ENCODE measurements at regions of chr13 and their contacts with region 1.

Region 1: GRCh38 chr13:49936085-49936940 is at the start of gene SPRYD7:
- DNase-seq: peak; percentile 99 to 100
- H3K4me3 ChIP-seq: peak within 1 kb of the TSS; percentile 97
- H3K4me3 Mint-ChIP-seq: peak within 1 kb of the TSS; percentile 100
- H3K27ac Mint-ChIP-seq: peak within 1 kb of the TSS; percentile 98
- H3K4me1 ChIP-seq: peaks cover 43% of the 10 kb centered on the region
- H3K4me1 Mint-ChIP-seq: peaks cover 32% of the 10 kb centered on the region
- H3K27me3 ChIP-seq: no peaks in the 10 kb centered on the region
- H3K27me3 Mint-ChIP-seq: no peaks in the 10 kb centered on the region
- CTCF ChIP-seq: peak; percentile 97 to 99
- total RNA-seq, gene SPRYD7: 16.7 and 20.7 TPM in 2 replicates

Region 2: DNA sequence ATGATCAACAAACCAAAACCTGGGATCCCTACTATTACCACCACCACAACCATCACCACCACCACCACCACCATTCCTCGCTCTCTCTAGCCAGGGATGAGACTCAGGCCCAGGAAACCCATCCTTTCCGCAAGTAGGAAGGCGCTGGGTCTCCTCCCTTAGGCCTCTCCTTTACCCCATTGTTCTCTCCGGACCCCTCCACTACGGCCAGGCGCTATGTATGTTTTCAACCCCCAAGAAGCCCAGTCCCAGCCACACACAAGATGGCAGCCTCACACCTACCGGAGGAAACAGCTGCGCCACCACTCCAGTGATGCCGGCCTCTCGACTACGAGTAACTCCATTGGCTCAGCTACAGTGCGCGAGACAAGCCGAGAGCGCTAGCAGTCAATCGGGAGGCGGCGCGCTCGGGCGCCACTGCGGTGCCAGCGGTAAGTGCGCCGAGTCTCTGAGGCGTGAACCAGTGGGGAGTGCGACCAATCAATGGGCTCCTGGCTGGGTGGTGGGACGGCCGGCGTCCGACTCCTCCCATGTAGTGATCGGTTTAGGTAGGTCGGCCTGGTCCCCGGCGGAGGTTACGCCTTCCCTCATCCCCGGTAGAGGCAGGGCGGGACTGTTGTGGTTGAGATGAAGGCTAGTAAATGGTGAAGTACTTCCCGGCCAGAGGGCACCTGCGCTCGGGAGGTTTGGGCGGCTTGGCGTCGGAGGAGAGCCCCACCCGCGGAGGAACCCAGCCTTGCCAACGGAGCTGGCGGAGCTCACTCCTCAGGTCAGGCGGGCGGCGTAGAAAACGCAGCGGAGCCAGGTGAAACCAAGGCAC is 492.4 kb before region 1 on chr13 and contains the starts of genes CAB39L and SETDB2:
- CTCF ChIA-PET with region 1: interaction called, 4 read pairs
- POLR2A ChIA-PET with region 1: no interaction called
- intact Hi-C with region 1: loop called (anchors 5 kb)
- DNase-seq: peak; percentile 99 to 100
- H3K4me3 ChIP-seq: peak within 1 kb of the TSS; percentile 60
- H3K4me3 Mint-ChIP-seq: peak within 1 kb of the TSS; percentile 87
- H3K27ac Mint-ChIP-seq: peak within 1 kb of the TSS; percentile 90
- H3K4me1 ChIP-seq: no peaks in the 10 kb centered on the region; the same call in 1 of the 2 replicates
- H3K4me1 Mint-ChIP-seq: peaks cover 6% of the 10 kb centered on the region
- H3K27me3 ChIP-seq: no peaks in the 10 kb centered on the region
- H3K27me3 Mint-ChIP-seq: no peaks in the 10 kb centered on the region
- CTCF ChIP-seq: peak; percentile 22 to 39
- total RNA-seq, gene CAB39L: 40.6 and 48.6 TPM in 2 replicates
- total RNA-seq, gene SETDB2: 14.7 and 15.5 TPM in 2 replicates

Region 3: GRCh38 chr13:49669735-49670309 is 266.5 kb before region 1 on chr13:
- CTCF ChIA-PET with region 1: no interaction called
- POLR2A ChIA-PET with region 1: no interaction called
- intact Hi-C with region 1: loop called (anchors 5 kb)
- DNase-seq: peak; percentile 54 to 72
- H3K4me3 ChIP-seq: no peak overlapping the region
- H3K4me3 Mint-ChIP-seq: no peak overlapping the region
- H3K27ac Mint-ChIP-seq: no peak overlapping the region
- H3K4me1 ChIP-seq: no peaks in the 10 kb centered on the region
- H3K4me1 Mint-ChIP-seq: no peaks in the 10 kb centered on the region
- H3K27me3 ChIP-seq: no peaks in the 10 kb centered on the region
- H3K27me3 Mint-ChIP-seq: no peaks in the 10 kb centered on the region
- CTCF ChIP-seq: peak; percentile 63 to 75

Region 4: DNA sequence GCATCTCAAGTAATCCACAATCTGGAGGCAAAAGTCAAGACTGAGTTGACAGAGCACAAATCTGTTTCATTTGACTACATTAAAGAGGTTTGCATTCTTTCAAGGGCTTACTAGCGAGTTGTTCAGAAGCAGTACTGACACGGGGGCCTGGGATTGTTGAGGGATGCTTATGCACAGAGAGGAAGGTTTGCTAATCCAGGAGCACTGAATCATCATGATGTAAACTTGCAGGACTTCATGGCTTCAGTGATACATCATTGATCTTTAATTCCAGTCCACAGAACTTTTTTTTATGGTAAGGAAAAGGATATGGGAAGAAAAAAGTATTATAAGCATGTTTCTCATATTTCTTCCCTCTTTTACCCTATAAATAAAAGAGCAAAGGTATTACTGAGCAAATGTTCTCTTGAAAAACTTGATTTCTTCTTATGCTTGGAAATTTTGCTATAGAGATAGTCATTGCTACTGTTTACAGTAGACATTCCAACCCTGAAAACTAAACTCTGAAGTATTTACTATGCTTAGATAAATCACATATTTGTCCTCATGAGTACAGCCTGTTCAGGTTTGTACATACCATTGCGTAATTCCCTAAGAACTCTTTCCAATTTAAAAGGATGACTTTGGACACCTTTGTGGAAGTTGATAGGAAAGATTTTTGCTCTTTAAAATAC is 78.0 kb before region 1 on chr13:
- CTCF ChIA-PET with region 1: interaction called, 7 read pairs
- POLR2A ChIA-PET with region 1: no interaction called
- intact Hi-C with region 1: loop called (anchors 1 kb)
- DNase-seq: peak; percentile 75 to 86
- H3K4me3 ChIP-seq: no peak overlapping the region
- H3K4me3 Mint-ChIP-seq: peak overlapping the region; percentile 55
- H3K27ac Mint-ChIP-seq: peak overlapping the region; percentile 94
- H3K4me1 ChIP-seq: peaks cover 27% of the 10 kb centered on the region
- H3K4me1 Mint-ChIP-seq: peaks cover 18% of the 10 kb centered on the region
- H3K27me3 ChIP-seq: no peaks in the 10 kb centered on the region
- H3K27me3 Mint-ChIP-seq: no peaks in the 10 kb centered on the region
- CTCF ChIP-seq: no peak

Region 5: DNA sequence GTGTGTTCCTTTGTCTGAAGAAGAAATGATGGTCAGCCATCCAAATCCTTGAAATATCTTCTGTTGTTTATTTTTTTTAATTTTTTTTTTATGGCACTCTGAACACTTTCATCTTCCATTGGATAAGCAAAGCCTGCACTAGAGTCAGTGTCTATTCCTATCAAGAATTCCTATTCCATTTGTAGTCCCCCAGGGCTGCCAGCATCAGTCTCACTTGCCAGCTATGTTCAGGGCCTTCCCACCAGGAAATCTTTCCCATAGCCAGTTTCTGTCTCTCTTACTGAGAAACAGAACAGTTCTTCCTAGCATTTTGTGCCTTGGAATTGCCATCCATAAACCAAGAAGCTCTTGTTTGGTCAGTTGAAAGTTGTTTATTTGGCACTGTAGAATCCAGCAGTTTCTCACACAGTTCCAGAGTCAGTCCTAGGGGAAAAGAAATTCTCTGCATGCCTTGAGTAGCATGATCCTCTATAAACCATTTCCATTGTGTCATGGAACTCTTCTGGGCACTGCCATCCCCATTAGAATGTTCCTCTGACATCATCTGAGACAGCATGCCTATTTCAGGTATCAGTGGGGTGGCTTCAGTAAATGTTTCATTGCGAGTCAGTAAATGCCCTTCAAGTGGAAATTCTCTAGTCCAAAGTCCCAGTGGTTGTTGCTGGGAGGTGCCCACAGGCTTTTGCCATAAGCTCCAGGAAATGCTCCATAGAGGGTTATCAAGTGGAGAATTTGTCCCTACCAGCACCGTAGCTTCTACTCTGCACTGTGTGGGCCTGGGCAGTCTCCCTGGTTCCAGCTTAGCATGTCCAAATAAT is 18.6 kb after region 1 on chr13:
- CTCF ChIA-PET with region 1: interaction called, 16 read pairs
- POLR2A ChIA-PET with region 1: interaction called, 3 read pairs
- intact Hi-C with region 1: loop called (anchors 1 kb)
- DNase-seq: no peak
- H3K4me3 ChIP-seq: no peak overlapping the region
- H3K4me3 Mint-ChIP-seq: no peak overlapping the region
- H3K27ac Mint-ChIP-seq: no peak overlapping the region
- H3K4me1 ChIP-seq: peaks cover 31% of the 10 kb centered on the region
- H3K4me1 Mint-ChIP-seq: peaks cover 7% of the 10 kb centered on the region
- H3K27me3 ChIP-seq: no peaks in the 10 kb centered on the region
- H3K27me3 Mint-ChIP-seq: no peaks in the 10 kb centered on the region
- CTCF ChIP-seq: no peak

Region 6: GRCh38 chr13:50123862-50124536 is 187.7 kb after region 1 on chr13:
- CTCF ChIA-PET with region 1: interaction called, 3 read pairs
- POLR2A ChIA-PET with region 1: interaction called, 3 read pairs
- intact Hi-C with region 1: loop called (anchors 5 kb)
- DNase-seq: peak; percentile 95 to 98
- H3K4me3 ChIP-seq: peak overlapping the region; percentile 100
- H3K4me3 Mint-ChIP-seq: peak overlapping the region; percentile 95
- H3K27ac Mint-ChIP-seq: peak overlapping the region; percentile 90
- H3K4me1 ChIP-seq: peaks cover 22% of the 10 kb centered on the region
- H3K4me1 Mint-ChIP-seq: peaks cover 26% of the 10 kb centered on the region
- H3K27me3 ChIP-seq: no peaks in the 10 kb centered on the region
- H3K27me3 Mint-ChIP-seq: no peaks in the 10 kb centered on the region
- CTCF ChIP-seq: no peak

Region 7: DNA sequence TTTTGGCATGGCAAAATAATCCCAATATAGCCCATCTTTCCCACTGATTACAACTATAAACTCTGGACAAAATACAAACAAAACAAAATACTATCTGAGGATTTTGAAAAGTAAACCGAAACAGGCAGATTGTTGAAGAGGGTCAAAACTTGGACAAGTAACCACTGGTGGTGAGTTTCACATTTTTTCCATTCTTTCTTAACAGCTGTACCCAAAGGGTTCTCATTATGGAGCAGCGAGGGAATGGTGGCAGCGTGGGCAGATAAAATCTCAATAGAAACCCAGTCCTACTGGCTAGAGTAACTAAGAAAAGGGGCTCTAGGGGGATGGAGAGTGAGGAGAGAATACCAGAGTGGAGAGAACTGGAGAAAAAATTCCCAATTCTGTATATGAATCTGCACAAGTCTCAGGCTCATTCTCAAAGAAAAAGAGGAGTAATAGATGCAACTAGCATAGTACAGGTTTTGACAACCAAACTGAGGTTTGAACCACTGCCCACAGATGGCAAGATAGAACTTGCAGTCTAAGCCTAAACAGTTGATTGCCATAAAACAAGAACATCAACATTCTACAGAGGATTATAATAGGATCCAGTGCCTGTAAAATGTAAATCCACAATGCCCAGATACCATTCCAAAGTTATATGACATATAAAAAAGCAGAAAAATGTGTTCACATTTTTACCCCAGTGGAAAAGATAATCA is 363.4 kb after region 1 on chr13:
- CTCF ChIA-PET with region 1: no interaction called
- POLR2A ChIA-PET with region 1: no interaction called
- intact Hi-C with region 1: no loop called
- DNase-seq: no peak
- H3K4me3 ChIP-seq: no peak overlapping the region
- H3K4me3 Mint-ChIP-seq: no peak overlapping the region
- H3K27ac Mint-ChIP-seq: no peak overlapping the region
- H3K4me1 ChIP-seq: no peaks in the 10 kb centered on the region
- H3K4me1 Mint-ChIP-seq: peaks cover 13% of the 10 kb centered on the region
- H3K27me3 ChIP-seq: no peaks in the 10 kb centered on the region
- H3K27me3 Mint-ChIP-seq: no peaks in the 10 kb centered on the region
- CTCF ChIP-seq: no peak

Measured in Caco-2 (cell line).